GM12878 (cell line): ENCODE measurements at regions of chr7 and their contacts with region 1.

Region 1: DNA sequence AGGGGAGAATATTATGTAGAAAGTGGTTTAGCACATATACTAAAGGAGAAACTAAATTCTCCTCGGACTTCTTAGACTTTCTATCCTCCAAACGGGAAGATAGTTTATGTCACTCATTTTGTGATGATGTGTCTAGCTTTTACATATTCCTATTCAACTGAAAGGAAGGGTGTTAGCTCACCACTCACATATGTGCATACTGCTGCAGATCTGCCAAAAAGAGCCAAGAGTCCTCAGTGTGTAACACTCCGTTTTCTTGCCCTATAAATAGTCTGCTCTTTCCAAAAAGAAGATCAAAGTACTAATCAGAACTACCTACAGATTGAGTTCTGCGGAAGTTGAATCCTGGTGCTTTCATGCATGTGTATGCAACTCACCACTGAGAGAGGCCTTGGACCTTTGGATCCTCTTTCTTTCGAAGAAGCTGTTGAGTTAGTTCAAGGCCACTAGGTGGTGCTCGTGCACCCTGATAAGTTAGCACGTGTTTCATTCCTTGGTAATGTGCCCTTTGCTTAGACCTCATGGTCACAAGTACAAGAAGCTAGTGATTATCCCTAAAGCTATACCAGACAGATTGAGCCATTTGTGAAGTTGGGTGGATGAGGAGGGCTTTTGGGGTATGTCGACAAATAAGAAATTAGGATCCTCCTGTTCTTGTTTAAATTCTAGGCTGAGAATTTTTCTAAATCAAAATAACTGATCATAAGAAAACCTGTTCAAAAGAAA is 14.1 kb downstream of the YAE1 start:
- DNase-seq: peak; percentile 77
- ATAC-seq: peak; percentile 98
- H3K4me3 ChIP-seq: no peak overlapping the region
- H3K27ac ChIP-seq: no peak overlapping the region
- H3K4me1 ChIP-seq: no peaks in the 10 kb centered on the region
- H3K27me3 ChIP-seq: no peaks in the 10 kb centered on the region
- CTCF ChIP-seq: peak; percentile 73 to 97 (median 80)
- EP300 ChIP-seq: no peak
- POLR2A ChIP-seq: no peak
- RAD21 ChIP-seq: peak; percentile 98

Region 2: GRCh38 chr7:39566023-39566921 is 14.0 kb before region 1 on chr7 and contains the start of gene YAE1:
- CTCF ChIA-PET with region 1: interaction called, 9 read pairs
- POLR2A ChIA-PET with region 1: interaction called, 3 read pairs
- RAD21 ChIA-PET with region 1: interaction called, 11 read pairs
- SMC1A ChIA-PET with region 1: interaction called, 12 read pairs
- in situ Hi-C with region 1: no loop called
- intact Hi-C with region 1: no loop called
- DNase-seq: peak; percentile 54
- ATAC-seq: peak; percentile 99
- H3K4me3 ChIP-seq: peak within 1 kb of the TSS; percentile 96
- H3K27ac ChIP-seq: peak within 1 kb of the TSS; percentile 70
- H3K4me1 ChIP-seq: peaks cover 3% of the 10 kb centered on the region; the same call in 1 of the 2 replicates
- H3K27me3 ChIP-seq: no peaks in the 10 kb centered on the region
- CTCF ChIP-seq: no peak
- EP300 ChIP-seq: no peak
- POLR2A ChIP-seq: peak; percentile 98
- RAD21 ChIP-seq: no peak
- polyA plus RNA-seq, gene YAE1: 33.5 to 35.8 TPM

Region 3: GRCh38 chr7:39609113-39609934 is 29.0 kb after region 1 on chr7:
- CTCF ChIA-PET with region 1: interaction called, 20 read pairs
- POLR2A ChIA-PET with region 1: interaction called, 3 read pairs
- RAD21 ChIA-PET with region 1: interaction called, 4 read pairs
- SMC1A ChIA-PET with region 1: interaction called, 5 read pairs
- in situ Hi-C with region 1: no loop called
- intact Hi-C with region 1: no loop called
- DNase-seq: no peak
- ATAC-seq: peak; percentile 72
- H3K4me3 ChIP-seq: 0 out of 2 replicates have a peak overlapping the region, but pooled peaks have one; percentile 15
- H3K27ac ChIP-seq: no peak overlapping the region
- H3K4me1 ChIP-seq: no peaks in the 10 kb centered on the region
- H3K27me3 ChIP-seq: peaks cover 0 to 8% of the 10 kb centered on the region in 2 experiments; a peak in 1 of 4 replicates
- CTCF ChIP-seq: peak in 1 of 3 experiments; percentile 25; a peak in 1 of 6 replicates
- EP300 ChIP-seq: no peak
- POLR2A ChIP-seq: no peak
- RAD21 ChIP-seq: no peak

Region 4: GRCh38 chr7:39623018-39623731 is 42.9 kb after region 1 on chr7 and contains the start of gene RALA:
- CTCF ChIA-PET with region 1: interaction called, 42 read pairs
- POLR2A ChIA-PET with region 1: interaction called, 3 read pairs
- RAD21 ChIA-PET with region 1: interaction called, 32 read pairs
- SMC1A ChIA-PET with region 1: interaction called, 81 read pairs
- in situ Hi-C with region 1: no loop called
- intact Hi-C with region 1: loop called (anchors 2 kb)
- DNase-seq: peak; percentile 48
- ATAC-seq: peak; percentile 89
- H3K4me3 ChIP-seq: peak within 1 kb of the TSS; percentile 88
- H3K27ac ChIP-seq: peak within 1 kb of the TSS; percentile 89
- H3K4me1 ChIP-seq: peaks cover 11% of the 10 kb centered on the region
- H3K27me3 ChIP-seq: no peaks in the 10 kb centered on the region
- CTCF ChIP-seq: no peak
- EP300 ChIP-seq: no peak
- POLR2A ChIP-seq: peak; percentile 96
- RAD21 ChIP-seq: no peak
- polyA plus RNA-seq, gene RALA: 8.1 to 13.3 TPM

Region 5: GRCh38 chr7:39709768-39710311 is 129.5 kb after region 1 on chr7:
- CTCF ChIA-PET with region 1: interaction called, 8 read pairs
- POLR2A ChIA-PET with region 1: no interaction called
- RAD21 ChIA-PET with region 1: interaction called, 9 read pairs
- SMC1A ChIA-PET with region 1: interaction called, 16 read pairs
- in situ Hi-C with region 1: no loop called
- intact Hi-C with region 1: no loop called
- DNase-seq: peak; percentile 13
- ATAC-seq: peak; percentile 94
- H3K4me3 ChIP-seq: no peak overlapping the region
- H3K27ac ChIP-seq: no peak overlapping the region
- H3K4me1 ChIP-seq: no peaks in the 10 kb centered on the region
- H3K27me3 ChIP-seq: no peaks in the 10 kb centered on the region
- CTCF ChIP-seq: no peak
- EP300 ChIP-seq: no peak
- POLR2A ChIP-seq: no peak
- RAD21 ChIP-seq: no peak

Region 6: GRCh38 chr7:39746103-39746819 is 165.9 kb after region 1 on chr7:
- CTCF ChIA-PET with region 1: interaction called, 612 read pairs
- POLR2A ChIA-PET with region 1: interaction called, 15 read pairs
- RAD21 ChIA-PET with region 1: interaction called, 410 read pairs
- SMC1A ChIA-PET with region 1: interaction called, 366 read pairs
- in situ Hi-C with region 1: loop called (anchors 5 kb)
- intact Hi-C with region 1: loop called (anchors 1 kb)
- DNase-seq: no peak
- ATAC-seq: peak; percentile 78
- H3K4me3 ChIP-seq: no peak overlapping the region
- H3K27ac ChIP-seq: no peak overlapping the region
- H3K4me1 ChIP-seq: peaks cover 6% of the 10 kb centered on the region
- H3K27me3 ChIP-seq: no peaks in the 10 kb centered on the region
- CTCF ChIP-seq: peak; percentile 67 to 83 (median 81)
- EP300 ChIP-seq: no peak
- POLR2A ChIP-seq: no peak
- RAD21 ChIP-seq: peak; percentile 91

Region 7: GRCh38 chr7:39894904-39895303 is 314.6 kb after region 1 on chr7:
- CTCF ChIA-PET with region 1: interaction called, 42 read pairs
- POLR2A ChIA-PET with region 1: no interaction called
- RAD21 ChIA-PET with region 1: interaction called, 12 read pairs
- SMC1A ChIA-PET with region 1: interaction called, 17 read pairs
- in situ Hi-C with region 1: no loop called
- intact Hi-C with region 1: no loop called
- DNase-seq: no peak
- ATAC-seq: no peak
- H3K4me3 ChIP-seq: no peak overlapping the region
- H3K27ac ChIP-seq: no peak overlapping the region
- H3K4me1 ChIP-seq: no peaks in the 10 kb centered on the region
- H3K27me3 ChIP-seq: peaks cover 0 to 1% of the 10 kb centered on the region in 2 experiments; a peak in 1 of 4 replicates
- CTCF ChIP-seq: no peak
- EP300 ChIP-seq: no peak
- POLR2A ChIP-seq: no peak
- RAD21 ChIP-seq: no peak